ENCODE measurements at regions of chr1 and their contacts with region 1.

Region 1: DNA sequence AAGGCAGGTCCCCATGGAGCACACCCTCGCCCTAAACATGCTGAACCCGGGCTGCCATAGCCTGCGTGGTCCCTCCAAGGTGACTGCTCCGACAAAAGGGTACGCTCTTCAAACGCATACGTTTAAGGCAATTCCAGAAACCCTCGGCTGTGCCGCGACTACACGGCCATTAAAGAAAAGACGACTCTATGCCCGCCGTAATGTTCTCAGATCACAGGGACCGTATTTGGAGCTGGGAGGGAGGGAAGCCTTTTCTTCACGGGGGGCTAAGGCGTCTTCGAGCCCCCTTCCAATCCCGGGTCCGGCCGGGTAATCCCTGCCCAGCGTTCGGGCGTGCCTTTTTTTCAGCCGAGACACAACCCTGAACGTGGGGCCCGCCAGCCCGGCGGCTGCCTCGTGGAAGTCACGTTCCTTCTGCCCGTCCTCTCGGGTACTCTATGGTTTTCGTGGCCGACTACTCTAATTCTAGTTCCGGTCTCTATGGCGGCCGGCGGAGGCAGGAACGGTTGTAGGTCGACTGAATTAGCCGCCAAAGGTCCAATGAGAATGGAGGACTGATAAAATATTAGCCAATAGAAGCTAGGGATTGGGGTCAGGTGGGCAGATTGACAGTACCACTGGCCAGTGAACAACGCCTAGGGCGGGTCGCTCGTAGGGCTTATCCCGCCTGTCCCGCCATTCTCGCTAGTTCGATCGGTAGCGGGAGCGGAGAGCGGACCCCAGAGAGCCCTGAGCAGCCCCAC is at the start of gene YBX1:
- DNase-seq: peak; percentile 98
- ATAC-seq: peak; percentile 95
- H3K4me3 ChIP-seq: peak within 1 kb of the TSS; percentile 76 to 87 (median 86)
- H3K27ac ChIP-seq: peak within 1 kb of the TSS; percentile 95
- H3K4me1 ChIP-seq: peaks cover 46% of the 10 kb centered on the region
- H3K27me3 ChIP-seq: no peaks in the 10 kb centered on the region; a peak in 1 of 5 replicates
- CTCF ChIP-seq: no peak
- EP300 ChIP-seq: no peak
- POLR2A ChIP-seq: peak; percentile 79 to 89
- RAD21 ChIP-seq: no peak
- total RNA-seq, gene YBX1: 500 and 628 TPM in 2 replicates

Region 2: DNA sequence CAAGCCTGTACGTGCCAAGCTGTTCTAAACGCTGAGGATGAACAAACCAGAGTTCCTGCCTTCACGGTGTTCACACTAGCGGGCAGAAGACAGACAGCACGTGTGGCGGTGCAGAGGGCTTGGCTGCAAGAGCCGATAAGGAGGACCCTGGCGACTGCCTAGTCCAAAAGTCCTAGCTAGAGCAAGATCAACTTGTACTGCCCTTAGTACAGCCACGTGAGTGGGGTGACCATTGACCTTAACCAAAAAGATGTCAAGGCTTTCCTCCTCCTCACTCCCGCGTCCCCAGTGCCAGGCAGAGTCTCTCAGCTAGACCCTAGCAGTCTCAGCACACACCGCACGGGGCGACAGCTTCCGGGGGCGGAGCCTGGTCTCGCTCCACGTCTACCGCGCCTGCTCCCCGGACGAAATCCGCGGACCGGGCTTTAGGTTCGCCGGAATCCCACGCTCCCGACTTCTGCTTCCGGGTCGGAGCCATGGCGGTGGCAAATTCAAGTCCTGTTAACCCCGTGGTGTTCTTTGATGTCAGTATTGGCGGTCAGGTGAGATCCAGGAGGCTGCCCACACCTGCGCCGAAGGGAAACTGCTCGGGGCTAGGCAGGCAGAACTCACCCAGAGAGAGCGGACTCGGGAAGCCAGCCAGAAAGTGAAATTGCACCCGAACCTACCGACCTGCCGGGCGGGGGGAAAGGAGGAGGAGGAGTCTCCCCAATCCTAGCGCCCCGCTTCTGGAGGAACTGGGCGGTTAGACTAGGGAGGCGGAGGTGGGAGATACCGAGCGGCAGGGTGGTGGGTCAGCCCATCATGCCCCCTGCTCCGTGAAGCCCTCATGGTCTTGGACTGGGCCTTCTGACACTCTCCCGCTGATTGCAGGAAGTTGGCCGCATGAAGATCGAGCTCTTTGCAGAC is 23.7 kb before region 1 on chr1 and contains the start of gene PPIH:
- CTCF ChIA-PET with region 1: no interaction called
- POLR2A ChIA-PET with region 1: interaction called, 51 read pairs
- in situ Hi-C with region 1: no loop called
- intact Hi-C with region 1: loop called (anchors 2 kb)
- DNase-seq: peak; percentile 90
- ATAC-seq: peak; percentile 99
- H3K4me3 ChIP-seq: peak within 1 kb of the TSS; percentile 74 to 98 (median 94)
- H3K27ac ChIP-seq: peak within 1 kb of the TSS; percentile 82
- H3K4me1 ChIP-seq: peaks cover 38% of the 10 kb centered on the region
- H3K27me3 ChIP-seq: peaks cover 0 to 4% of the 10 kb centered on the region in 2 experiments; a peak in 1 of 5 replicates
- CTCF ChIP-seq: peak; percentile 42
- EP300 ChIP-seq: peak; percentile 12 to 46; a peak in 1 of 4 replicates
- POLR2A ChIP-seq: peak; percentile 91 to 98
- RAD21 ChIP-seq: no peak; the same call in none of the 2 replicates
- total RNA-seq, gene PPIH: 72.6 and 93.3 TPM in 2 replicates

Region 3: GRCh38 chr1:42669936-42670335 is 12.0 kb before region 1 on chr1:
- CTCF ChIA-PET with region 1: no interaction called
- POLR2A ChIA-PET with region 1: interaction called, 17 read pairs
- in situ Hi-C with region 1: no loop called
- intact Hi-C with region 1: no loop called
- DNase-seq: no peak
- ATAC-seq: no peak
- H3K4me3 ChIP-seq: no peak overlapping the region
- H3K27ac ChIP-seq: no peak overlapping the region
- H3K4me1 ChIP-seq: no peaks in the 10 kb centered on the region
- H3K27me3 ChIP-seq: no peaks in the 10 kb centered on the region
- CTCF ChIP-seq: no peak
- EP300 ChIP-seq: no peak
- POLR2A ChIP-seq: no peak
- RAD21 ChIP-seq: no peak

Region 4: DNA sequence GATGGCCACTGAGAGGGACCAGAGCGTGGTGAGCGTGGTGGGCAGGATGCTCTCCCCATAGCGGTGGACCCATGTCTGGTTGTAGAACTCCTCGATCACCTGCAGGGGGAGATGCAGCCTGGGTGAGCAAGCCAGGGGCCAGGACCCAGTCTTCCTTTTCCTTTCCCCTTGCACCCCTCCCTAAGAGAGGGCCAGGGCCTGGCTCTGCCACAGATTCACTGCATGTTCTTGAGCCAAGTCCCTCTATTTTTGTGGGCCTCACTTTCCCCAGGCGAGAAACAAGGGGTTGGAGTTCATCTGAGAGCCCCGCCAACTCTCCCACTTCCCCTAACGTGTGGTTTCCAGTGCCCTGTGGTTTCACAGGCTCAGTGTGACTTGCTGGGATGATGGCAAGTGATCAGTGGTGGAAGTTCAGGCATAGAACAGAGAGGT is 249.2 kb after region 1 on chr1:
- CTCF ChIA-PET with region 1: no interaction called
- POLR2A ChIA-PET with region 1: no interaction called
- in situ Hi-C with region 1: no loop called
- intact Hi-C with region 1: no loop called
- DNase-seq: no peak
- ATAC-seq: peak; percentile 59
- H3K4me3 ChIP-seq: no peak overlapping the region
- H3K27ac ChIP-seq: no peak overlapping the region
- H3K4me1 ChIP-seq: peaks cover 73% of the 10 kb centered on the region; the same call in 1 of the 2 replicates
- H3K27me3 ChIP-seq: no peaks in the 10 kb centered on the region
- CTCF ChIP-seq: peak; percentile 68
- EP300 ChIP-seq: no peak
- POLR2A ChIP-seq: no peak
- RAD21 ChIP-seq: peak; percentile 61

Measured in HepG2 (cell line).